ENCODE measurements at regions of chr15 and their contacts with region 1.

Region 1: GRCh38 chr15:57306161-57306943 is 70.0 kb upstream of the CGNL1 start:
- DNase-seq: peak; percentile 87
- ATAC-seq: peak; percentile 73
- H3K4me3 ChIP-seq: peak overlapping the region; percentile 48 to 97 (median 66)
- H3K4me3 Mint-ChIP-seq: peak overlapping the region; percentile 85
- H3K27ac ChIP-seq: peak overlapping the region; percentile 57 to 87
- H3K27ac Mint-ChIP-seq: peak overlapping the region; percentile 87
- H3K4me1 ChIP-seq: peaks cover 36 to 44% of the 10 kb centered on the region in 2 donors
- H3K4me1 Mint-ChIP-seq: peaks cover 57% of the 10 kb centered on the region
- H3K27me3 ChIP-seq: no peaks in the 10 kb centered on the region
- H3K27me3 Mint-ChIP-seq: no peaks in the 10 kb centered on the region
- CTCF ChIP-seq: peak; percentile 95

Region 2: DNA sequence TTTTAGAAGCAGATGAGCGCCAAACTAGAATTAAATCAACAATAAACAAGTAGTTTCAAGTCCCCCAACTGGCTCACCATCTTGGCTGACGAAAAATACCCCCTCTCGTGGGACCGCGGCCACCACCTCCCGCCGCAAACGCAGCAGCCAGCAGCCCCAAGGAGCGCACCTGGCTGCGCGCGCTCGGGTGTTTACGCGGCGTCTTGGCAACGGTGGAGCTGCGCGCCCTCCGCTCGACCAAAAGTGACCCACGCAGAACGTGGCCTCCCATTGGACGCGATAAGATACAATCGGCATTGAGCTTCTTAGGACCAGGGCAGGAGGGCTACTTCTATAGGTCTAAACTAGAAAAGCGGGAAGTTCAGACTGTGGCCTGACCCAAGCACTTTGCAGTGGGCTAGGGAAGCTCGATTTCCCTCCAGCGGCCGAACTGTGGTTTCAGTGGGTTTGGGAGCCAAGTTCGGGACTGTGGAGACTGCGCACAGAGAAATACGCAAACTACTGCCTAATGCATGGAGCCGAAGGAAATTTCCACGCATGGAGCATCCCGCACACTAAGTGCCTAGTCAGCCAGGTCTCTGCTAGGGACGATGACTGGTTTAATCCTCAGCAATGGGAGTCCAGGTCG is 841.3 kb before region 1 on chr15 and contains the start of gene MNS1:
- CTCF ChIA-PET with region 1: no interaction called
- POLR2A ChIA-PET with region 1: no interaction called
- intact Hi-C with region 1: loop called (anchors 5 kb)
- DNase-seq: peak; percentile 97
- ATAC-seq: peak; percentile 96
- H3K4me3 ChIP-seq: peak within 1 kb of the TSS; percentile 37 to 71 (median 59)
- H3K4me3 Mint-ChIP-seq: peak within 1 kb of the TSS; percentile 94
- H3K27ac ChIP-seq: peak within 1 kb of the TSS; percentile 56 to 79
- H3K27ac Mint-ChIP-seq: peak within 1 kb of the TSS; percentile 96
- H3K4me1 ChIP-seq: peaks cover 4 to 12% of the 10 kb centered on the region in 2 donors
- H3K4me1 Mint-ChIP-seq: peaks cover 21% of the 10 kb centered on the region
- H3K27me3 ChIP-seq: no peaks in the 10 kb centered on the region
- H3K27me3 Mint-ChIP-seq: no peaks in the 10 kb centered on the region
- CTCF ChIP-seq: no peak
- total RNA-seq, gene MNS1: 0.83 TPM in 1 of 2 replicates, not detected in the other

Region 3: DNA sequence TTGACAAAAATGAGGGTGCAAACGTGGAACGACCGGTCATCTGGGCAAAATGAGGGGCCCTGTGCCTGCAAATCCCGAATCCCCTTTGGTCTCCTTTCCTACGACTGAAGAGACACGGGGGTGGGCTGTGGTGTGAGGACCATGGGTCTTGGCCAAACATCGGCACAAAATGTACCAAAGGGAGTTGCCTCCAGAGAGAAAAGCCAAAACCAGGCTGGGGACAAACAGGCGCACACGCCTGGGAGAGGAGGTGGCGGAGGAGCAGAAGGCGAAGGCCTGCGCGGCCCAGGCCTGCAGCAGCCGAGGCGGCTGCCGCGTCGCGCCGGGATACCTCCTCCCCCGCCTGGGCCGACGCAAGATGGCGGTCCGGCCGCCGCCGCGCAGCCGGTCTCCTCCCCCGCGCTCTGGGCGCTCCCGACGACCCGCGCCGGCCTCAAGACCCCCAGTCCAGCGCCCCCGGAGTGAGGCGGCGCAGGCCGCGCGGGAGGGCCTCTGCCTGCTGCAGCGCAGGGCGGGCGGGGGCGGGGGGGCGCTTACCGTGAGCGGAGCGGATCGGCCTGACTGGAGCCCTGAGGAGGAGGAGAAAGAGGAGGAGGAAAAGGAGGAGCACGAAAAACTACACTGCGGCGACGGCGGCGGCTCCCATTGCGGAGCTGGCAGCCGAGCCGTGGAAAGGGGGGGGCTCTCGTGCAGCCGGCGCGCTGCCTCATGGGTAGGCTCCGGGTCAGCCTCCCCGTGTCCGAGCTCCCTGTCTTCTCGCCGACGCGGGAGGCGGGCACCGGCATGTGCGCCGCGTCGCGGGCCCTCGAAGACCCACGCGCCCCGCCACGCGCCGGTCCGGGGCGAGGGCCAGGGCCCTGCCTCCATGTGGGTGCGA is 573.2 kb before region 1 on chr15 and contains the start of gene ZNF280D:
- CTCF ChIA-PET with region 1: no interaction called
- POLR2A ChIA-PET with region 1: no interaction called
- intact Hi-C with region 1: loop called (anchors 5 kb)
- DNase-seq: peak; percentile 86
- ATAC-seq: peak; percentile 84
- H3K4me3 ChIP-seq: peak within 1 kb of the TSS; percentile 65 to 92 (median 83)
- H3K4me3 Mint-ChIP-seq: peak within 1 kb of the TSS; percentile 94
- H3K27ac ChIP-seq: peak within 1 kb of the TSS; percentile 59 to 83
- H3K27ac Mint-ChIP-seq: peak within 1 kb of the TSS; percentile 92
- H3K4me1 ChIP-seq: peaks cover 24 to 25% of the 10 kb centered on the region in 2 donors
- H3K4me1 Mint-ChIP-seq: peaks cover 36% of the 10 kb centered on the region
- H3K27me3 ChIP-seq: no peaks in the 10 kb centered on the region
- H3K27me3 Mint-ChIP-seq: no peaks in the 10 kb centered on the region
- CTCF ChIP-seq: no peak
- total RNA-seq, gene ZNF280D: 63.7 and 68.3 TPM in 2 replicates

Region 4: GRCh38 chr15:57146506-57147201 is 159.7 kb before region 1 on chr15:
- CTCF ChIA-PET with region 1: interaction called, 323 read pairs
- POLR2A ChIA-PET with region 1: interaction called, 6 read pairs
- intact Hi-C with region 1: loop called (anchors 1 kb)
- DNase-seq: peak; percentile 73
- ATAC-seq: no peak
- H3K4me3 ChIP-seq: no peak overlapping the region
- H3K4me3 Mint-ChIP-seq: peak overlapping the region; percentile 57
- H3K27ac ChIP-seq: no peak overlapping the region
- H3K27ac Mint-ChIP-seq: no peak overlapping the region
- H3K4me1 ChIP-seq: peaks cover 12 to 15% of the 10 kb centered on the region in 2 donors
- H3K4me1 Mint-ChIP-seq: peaks cover 11% of the 10 kb centered on the region
- H3K27me3 ChIP-seq: no peaks in the 10 kb centered on the region
- H3K27me3 Mint-ChIP-seq: no peaks in the 10 kb centered on the region
- CTCF ChIP-seq: peak; percentile 96

Region 5: DNA sequence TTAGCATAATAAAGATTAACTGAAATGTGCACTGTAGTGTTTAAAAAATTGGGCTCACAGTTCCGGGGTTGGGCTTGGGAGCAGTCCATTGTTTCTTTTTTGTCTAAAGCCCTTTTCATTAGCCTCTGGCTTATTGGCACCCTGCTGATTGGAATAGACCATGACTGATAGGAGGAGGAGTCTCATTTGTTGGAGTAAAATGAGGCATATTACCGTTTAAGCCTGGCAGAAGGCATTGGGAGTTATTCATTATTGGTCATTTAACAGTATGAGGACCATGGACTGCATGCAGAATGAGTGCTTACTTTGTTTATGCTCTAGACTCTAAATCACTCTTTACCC is 69.1 kb before region 1 on chr15:
- CTCF ChIA-PET with region 1: interaction called, 15 read pairs
- POLR2A ChIA-PET with region 1: no interaction called
- intact Hi-C with region 1: no loop called
- DNase-seq: no peak
- ATAC-seq: no peak
- H3K4me3 ChIP-seq: no peak overlapping the region
- H3K4me3 Mint-ChIP-seq: no peak overlapping the region
- H3K27ac ChIP-seq: no peak overlapping the region
- H3K27ac Mint-ChIP-seq: no peak overlapping the region
- H3K4me1 ChIP-seq: no peaks in the 10 kb centered on the region
- H3K4me1 Mint-ChIP-seq: no peaks in the 10 kb centered on the region
- H3K27me3 ChIP-seq: no peaks in the 10 kb centered on the region
- H3K27me3 Mint-ChIP-seq: no peaks in the 10 kb centered on the region
- CTCF ChIP-seq: no peak

Region 6: DNA sequence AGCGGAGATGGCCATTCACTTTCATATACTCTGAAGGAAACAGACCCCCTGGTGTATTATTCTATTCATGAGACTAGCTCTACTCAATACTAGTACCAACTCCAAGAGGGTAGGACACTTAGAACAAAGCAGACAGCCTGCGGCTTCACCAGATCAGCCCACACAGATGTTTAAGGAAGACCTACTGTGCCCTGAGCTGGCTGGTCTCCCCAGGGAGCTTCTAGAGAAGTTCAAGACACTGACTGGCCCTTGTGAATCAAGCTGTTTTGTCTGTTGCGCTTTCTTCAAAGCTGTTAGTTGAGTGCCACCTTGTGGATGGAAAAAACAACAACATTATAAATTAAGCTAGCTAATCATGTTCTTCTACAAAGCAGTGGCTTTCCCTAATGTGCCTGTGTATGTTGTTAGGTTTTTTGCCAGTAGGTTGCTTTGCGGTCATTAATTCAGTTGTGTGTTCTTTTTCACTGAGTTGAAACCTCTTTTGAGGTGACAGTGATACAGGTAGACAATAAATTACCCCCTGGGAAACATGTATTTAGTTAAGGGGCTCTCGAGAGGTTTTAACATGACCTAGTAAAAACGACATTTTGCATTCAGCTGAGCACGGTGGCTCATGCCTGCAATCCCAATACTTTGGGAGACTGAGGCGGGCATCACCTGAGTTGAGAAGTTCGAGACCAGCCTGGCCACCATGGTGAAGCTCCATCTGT is 221.2 kb after region 1 on chr15:
- CTCF ChIA-PET with region 1: interaction called, 34 read pairs
- POLR2A ChIA-PET with region 1: no interaction called
- intact Hi-C with region 1: loop called (anchors 1 kb)
- DNase-seq: peak; percentile 88
- ATAC-seq: peak; percentile 99
- H3K4me3 ChIP-seq: no peak overlapping the region
- H3K4me3 Mint-ChIP-seq: no peak overlapping the region
- H3K27ac ChIP-seq: no peak overlapping the region
- H3K27ac Mint-ChIP-seq: no peak overlapping the region
- H3K4me1 ChIP-seq: peaks cover 6 to 10% of the 10 kb centered on the region in 2 donors
- H3K4me1 Mint-ChIP-seq: peaks cover 15% of the 10 kb centered on the region
- H3K27me3 ChIP-seq: no peaks in the 10 kb centered on the region
- H3K27me3 Mint-ChIP-seq: no peaks in the 10 kb centered on the region
- CTCF ChIP-seq: peak; percentile 80

Region 7: DNA sequence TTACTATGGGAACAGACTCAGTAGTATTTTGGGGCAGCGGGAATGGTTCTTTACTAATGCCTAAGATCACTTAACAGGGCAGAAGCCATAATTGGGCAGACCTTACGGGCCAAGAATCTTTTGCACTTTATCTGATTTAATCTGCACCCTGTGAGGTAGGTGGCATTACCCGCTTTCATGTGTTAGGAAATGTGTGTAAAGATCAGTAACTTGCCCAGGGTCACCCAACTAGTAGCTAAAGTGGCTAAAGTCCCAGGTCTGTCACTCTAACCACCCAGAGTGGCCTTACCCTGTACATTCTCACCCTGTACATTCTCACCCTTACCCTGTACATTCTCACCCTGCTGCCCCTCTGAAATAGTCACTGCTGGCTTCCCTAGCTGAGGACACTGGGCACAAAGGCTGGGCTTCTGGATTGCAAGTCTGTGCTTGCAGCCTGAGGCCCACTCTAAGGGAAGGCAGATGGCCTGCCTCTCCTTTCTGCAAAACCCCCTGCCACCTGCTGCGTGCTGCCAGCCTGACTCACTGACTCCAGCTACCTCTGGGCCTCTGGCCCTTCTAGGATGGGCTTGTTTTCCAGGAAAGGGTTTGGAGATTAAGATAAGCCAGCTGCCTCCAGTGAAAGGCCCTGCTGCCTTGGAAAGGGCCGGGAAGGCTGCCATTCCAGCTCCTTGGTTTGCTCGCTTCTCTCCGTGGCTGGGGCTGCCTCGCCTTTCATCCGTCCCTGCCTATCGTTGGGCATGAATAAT is 247.9 kb after region 1 on chr15:
- CTCF ChIA-PET with region 1: no interaction called
- POLR2A ChIA-PET with region 1: no interaction called
- intact Hi-C with region 1: no loop called
- DNase-seq: no peak
- ATAC-seq: no peak
- H3K4me3 ChIP-seq: no peak overlapping the region
- H3K4me3 Mint-ChIP-seq: no peak overlapping the region
- H3K27ac ChIP-seq: no peak overlapping the region
- H3K27ac Mint-ChIP-seq: no peak overlapping the region
- H3K4me1 ChIP-seq: no peaks in the 10 kb centered on the region
- H3K4me1 Mint-ChIP-seq: no peaks in the 10 kb centered on the region
- H3K27me3 ChIP-seq: peaks cover 0 to 4% (median 0%) of the 10 kb centered on the region in 4 experiments
- H3K27me3 Mint-ChIP-seq: peaks cover 8% of the 10 kb centered on the region
- CTCF ChIP-seq: no peak